Colonic mucosa (tissue), 4 donors: ENCODE measurements at regions of chr1 and their contacts with region 1.

Region 1: GRCh38 chr1:16175610-16176553 is 20.0 kb upstream of the EPHA2 start:
- DNase-seq: peak; percentile 89
- H3K4me3 ChIP-seq: no peak overlapping the region
- H3K27ac ChIP-seq: peak overlapping the region; percentile 66
- H3K4me1 ChIP-seq: peaks cover 30% of the 10 kb centered on the region
- H3K27me3 ChIP-seq: no peaks in the 10 kb centered on the region
- CTCF ChIP-seq: no peak

Region 2: DNA sequence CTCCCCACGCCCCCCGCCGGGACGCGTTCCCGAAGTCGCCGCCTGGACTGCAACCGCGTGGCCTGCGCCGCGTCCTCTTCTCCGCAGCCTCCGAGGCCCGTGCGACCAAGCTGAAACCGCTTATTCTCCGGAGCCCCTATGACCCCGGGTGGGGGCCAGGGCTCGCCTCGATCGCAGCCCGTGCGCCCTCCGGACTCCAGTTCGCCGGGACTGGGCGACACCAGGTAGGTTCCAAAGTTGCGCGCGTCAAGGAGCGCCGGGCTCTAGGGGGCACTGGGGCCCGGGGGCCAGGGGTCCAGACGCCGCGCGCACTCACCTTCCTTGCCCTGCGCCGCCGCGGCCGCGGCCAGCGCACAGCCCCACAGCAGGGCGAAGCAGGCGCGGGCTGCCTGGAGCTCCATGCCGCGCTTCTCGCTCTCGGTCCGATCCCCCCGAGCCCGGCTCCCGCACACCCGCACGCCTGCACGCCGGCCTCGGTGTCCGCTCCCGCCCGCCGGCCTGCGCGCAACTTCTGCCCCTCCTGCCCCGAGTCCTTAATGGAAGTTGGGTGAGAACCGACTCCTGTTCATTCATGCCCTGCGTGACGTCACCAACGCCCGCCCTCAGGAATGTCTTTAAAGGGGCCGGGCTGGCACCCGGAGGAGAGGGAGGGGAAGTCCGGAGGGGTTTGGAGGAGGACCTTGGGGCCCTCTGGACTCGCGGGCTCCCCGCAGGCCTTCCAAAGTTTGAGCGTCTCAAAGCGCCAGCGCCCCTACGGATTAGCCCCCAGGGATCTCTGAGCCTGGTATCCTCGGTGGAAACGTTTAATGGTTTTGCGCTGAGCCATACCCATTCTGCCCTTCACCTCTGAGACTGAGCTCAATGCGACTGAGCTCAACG is 20.1 kb before region 1 on chr1 and contains the start of gene EPHA2:
- intact Hi-C with region 1: loop called (anchors 2 kb)
- DNase-seq: peak; percentile 96
- H3K4me3 ChIP-seq: peak within 1 kb of the TSS; percentile 62
- H3K27ac ChIP-seq: peak within 1 kb of the TSS; percentile 86
- H3K4me1 ChIP-seq: peaks cover 23% of the 10 kb centered on the region
- H3K27me3 ChIP-seq: no peaks in the 10 kb centered on the region
- CTCF ChIP-seq: no peak
- total RNA-seq, gene EPHA2: 15.7 to 40.8 TPM

Region 3: DNA sequence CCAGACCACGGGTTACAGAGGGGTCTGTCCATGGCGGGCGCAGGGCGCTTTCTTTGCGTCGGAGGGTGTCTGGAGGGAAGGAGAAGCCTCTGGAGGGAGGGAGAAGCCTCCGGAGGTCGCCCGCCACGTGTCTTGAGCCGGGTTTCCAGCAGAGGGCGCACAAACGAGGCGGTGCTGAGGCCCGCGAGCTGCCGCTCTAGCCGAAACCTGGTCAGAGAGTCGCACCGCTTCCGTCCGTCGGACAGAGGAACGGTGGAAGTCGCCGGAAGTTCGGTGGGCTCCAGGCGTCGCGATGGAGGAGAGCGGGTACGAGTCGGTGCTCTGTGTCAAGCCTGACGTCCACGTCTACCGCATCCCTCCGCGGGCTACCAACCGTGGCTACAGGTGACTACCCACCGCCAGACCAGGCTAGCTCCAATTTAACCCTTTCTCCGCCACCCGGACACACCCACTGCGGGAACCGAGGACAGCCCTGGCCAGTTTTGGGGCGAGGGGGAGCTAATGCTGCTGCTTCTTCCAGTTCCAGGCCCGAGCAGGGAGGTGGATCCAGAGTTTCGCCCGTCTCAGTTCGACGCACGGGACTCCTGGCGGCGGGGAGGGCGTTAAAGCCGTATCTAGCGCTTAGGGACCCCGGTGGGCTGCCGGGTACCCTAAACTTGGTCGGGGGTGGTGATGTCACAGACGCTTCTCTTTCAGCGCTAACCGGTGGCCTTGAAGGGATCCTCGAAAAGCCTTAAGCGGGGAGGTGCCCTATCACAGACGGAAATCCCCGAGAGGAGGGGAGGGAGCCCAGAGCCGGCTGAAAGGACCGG is 264.8 kb after region 1 on chr1 and contains the start of gene NECAP2:
- intact Hi-C with region 1: no loop called
- DNase-seq: peak; percentile 96
- H3K4me3 ChIP-seq: peak within 1 kb of the TSS; percentile 74
- H3K27ac ChIP-seq: peak within 1 kb of the TSS; percentile 73
- H3K4me1 ChIP-seq: peaks cover 5% of the 10 kb centered on the region
- H3K27me3 ChIP-seq: no peaks in the 10 kb centered on the region
- CTCF ChIP-seq: peak; percentile 84
- total RNA-seq, gene NECAP2: 46.4 to 57.7 TPM